Right ventricle myocardium superior (tissue), 1 donor: ENCODE measurements at regions of chr6 and their contacts with region 1.

Region 1: DNA sequence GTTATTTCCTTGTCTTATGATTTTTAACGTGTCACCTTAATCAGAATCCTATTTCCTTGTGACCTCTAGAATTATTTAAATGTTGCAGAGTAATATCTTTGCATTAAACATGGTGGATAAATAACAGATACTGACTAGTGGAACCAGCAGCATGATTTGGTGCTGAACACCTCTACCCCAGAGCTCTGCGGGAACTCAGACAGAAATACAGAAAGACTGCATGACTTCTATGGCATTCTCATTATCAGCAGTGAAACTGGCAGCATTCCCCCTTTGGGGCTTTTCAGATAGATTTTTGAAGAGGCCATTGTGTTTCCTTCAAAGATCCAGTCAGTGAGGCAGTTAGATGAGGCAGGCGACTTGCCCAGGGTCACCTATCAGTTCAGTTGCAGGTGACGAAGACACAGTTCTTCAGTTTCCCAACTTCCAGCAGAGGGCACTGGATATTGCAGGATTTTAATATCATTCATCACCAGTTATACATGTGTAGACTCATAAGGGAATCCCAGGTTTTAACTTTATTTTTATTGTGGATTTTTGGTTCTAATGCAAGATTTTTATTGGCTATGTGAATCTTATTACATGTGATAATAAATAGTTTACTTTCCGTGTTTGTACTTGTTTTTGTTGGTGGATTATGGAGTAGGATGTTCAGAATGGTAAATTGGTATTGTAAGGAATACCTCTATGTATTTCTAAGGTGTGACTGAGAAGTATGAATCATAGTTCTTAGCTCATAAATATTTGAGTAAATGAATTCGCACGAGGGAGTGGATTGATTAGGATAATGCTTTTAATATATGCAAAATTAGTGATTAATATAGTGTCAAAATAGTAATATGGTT is 81.3 kb downstream of the AFDN start:
- DNase-seq: no peak
- ATAC-seq: peak; percentile 62

Region 2: DNA sequence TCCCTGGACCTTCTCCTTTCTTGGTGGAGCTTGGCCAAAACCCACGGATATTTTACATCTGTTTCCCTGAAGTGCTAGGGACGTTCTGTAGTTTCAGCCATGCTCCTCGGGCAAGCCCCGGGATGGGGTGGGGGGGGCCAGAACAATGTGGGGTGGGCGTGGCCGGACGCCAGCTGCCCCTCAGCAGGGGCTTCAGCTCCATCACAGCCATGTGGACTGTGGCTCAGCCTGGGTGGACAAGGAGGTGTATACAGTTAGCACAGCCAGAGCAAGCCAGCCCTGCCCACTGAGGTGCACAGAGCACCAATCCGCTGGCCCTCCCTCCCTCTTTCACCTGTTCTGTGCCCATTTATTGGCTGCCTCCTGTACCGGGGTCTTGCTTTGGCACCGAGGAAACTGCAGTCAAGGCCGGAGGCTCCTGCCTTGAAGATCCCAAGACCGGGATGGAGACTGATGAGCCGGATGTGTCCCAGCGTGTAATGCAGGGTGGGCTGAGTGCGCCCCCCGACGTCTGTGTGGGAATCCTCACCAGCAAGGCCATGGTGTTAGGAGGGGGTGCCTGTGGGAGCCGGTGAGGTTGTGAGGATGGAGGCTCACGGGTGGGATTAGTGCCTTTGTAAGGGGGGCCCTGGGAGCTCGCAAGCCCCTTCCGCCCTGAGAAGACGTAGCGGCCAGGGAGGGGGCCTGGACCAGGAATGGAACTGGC is 143.0 kb after region 1 on chr6:
- intact Hi-C with region 1: loop called (anchors 10 kb)
- DNase-seq: peak; percentile 35
- ATAC-seq: no peak

Region 3: GRCh38 chr6:168126566-168127383 is 218.7 kb after region 1 on chr6:
- intact Hi-C with region 1: loop called (anchors 5 kb)
- DNase-seq: no peak
- ATAC-seq: no peak